CD4-positive, alpha-beta memory T cell (primary cell): ENCODE measurements at regions of chr1 and their contacts with region 1.

Region 1: DNA sequence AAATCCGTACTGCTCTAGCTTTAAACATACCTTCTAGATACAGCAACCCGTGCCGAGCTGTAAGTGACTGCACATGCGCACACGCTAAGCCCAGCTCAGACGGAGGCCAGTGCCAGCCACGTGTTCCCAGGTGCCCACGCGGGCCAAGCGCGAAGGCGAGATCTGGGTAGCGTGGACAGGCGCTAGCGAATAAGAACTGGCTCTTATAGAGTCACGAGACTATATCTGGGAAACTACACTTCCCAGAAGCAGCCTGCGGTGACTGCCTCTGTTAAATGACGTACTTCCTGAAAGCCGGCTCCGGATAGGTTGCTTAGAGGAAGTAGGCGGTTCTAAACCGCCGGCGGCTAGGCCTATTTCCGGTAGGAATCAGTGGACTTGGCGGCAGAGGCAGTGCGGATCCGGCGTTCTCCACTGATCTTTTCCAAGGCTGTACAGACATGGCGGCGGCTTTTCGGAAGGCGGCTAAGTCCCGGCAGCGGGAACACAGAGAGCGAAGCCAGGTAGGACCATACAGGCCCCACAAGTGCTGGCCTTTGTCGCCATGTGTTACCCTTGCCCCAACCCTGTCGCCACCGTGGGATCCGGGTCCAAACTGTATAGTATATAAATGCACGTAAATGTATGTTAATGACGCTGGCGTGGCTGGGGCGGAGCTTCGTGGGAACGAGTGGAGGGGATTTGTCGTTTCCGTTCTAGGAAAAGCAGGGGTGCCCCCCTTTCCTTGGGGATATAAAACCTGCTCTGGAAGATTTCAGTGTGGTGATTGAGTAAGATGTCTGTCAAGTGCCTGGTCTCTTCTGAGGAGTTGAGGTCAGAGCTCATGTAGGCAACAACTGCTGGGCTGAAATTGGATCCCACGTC is at the start of gene UTP11:
- DNase-seq: peak; percentile 91 to 96 (median 93)
- H3K4me3 ChIP-seq: peak within 1 kb of the TSS; percentile 72 to 94
- H3K4me3 Mint-ChIP-seq: peak within 1 kb of the TSS; percentile 91 to 100 (median 98)
- H3K27ac ChIP-seq: peak within 1 kb of the TSS; percentile 87
- H3K27ac Mint-ChIP-seq: peak within 1 kb of the TSS; percentile 92 to 100 (median 99)
- H3K4me1 ChIP-seq: peaks cover 29% of the 10 kb centered on the region
- H3K4me1 Mint-ChIP-seq: peaks cover 19 to 46% (median 34%) of the 10 kb centered on the region in 4 donors
- H3K27me3 ChIP-seq: no peaks in the 10 kb centered on the region
- H3K27me3 Mint-ChIP-seq: no peaks in the 10 kb centered on the region
- total RNA-seq, gene UTP11: 17.3 to 17.5 TPM

Region 2: DNA sequence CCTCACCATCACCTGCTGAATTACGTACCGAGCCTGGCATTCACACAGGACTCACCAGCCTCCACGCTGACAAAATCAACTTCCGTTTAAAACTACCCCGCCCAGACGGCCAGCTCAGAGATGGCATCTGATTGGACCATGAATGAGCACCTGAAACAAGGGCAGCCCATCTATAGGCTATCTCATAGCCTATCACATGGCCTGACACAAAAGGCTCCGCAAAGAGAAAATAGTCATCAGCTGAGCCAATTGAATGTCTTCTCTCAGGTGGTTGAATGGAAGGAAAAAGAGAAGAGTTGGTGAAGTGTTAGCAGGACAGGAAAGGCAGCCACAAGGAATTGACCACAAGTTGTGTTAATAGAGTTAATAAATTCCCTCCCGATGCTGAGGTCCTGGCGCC is 588.8 kb before region 1 on chr1:
- CTCF ChIA-PET with region 1: no interaction called
- POLR2A ChIA-PET with region 1: no interaction called
- intact Hi-C with region 1: no loop called
- DNase-seq: no peak
- H3K4me3 ChIP-seq: no peak overlapping the region
- H3K4me3 Mint-ChIP-seq: no peak overlapping the region
- H3K27ac ChIP-seq: no peak overlapping the region
- H3K27ac Mint-ChIP-seq: no peak overlapping the region
- H3K4me1 ChIP-seq: no peaks in the 10 kb centered on the region
- H3K4me1 Mint-ChIP-seq: no peaks in the 10 kb centered on the region
- H3K27me3 ChIP-seq: no peaks in the 10 kb centered on the region
- H3K27me3 Mint-ChIP-seq: peaks cover 10 to 37% of the 10 kb centered on the region in 2 donors

Region 3: DNA sequence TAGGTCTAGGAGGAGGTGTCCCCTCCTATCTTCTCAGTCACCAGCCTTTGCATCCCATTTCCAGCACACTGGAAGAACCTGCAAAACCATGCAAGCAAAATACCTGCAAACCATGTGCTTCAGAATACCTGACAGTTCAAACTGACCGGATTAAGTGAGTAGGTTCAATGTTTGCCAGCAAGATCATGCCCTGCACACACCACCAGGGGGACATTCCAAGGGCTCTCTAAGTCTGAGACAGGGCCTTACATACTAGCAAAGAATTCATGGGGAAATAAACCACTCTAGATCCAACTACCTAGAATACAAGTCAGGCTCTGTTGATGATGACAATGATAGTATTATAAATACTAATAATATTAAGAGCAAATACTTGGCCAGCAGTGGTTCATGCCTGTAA is 93.3 kb before region 1 on chr1:
- CTCF ChIA-PET with region 1: no interaction called
- POLR2A ChIA-PET with region 1: no interaction called
- intact Hi-C with region 1: no loop called
- DNase-seq: no peak
- H3K4me3 ChIP-seq: no peak overlapping the region
- H3K4me3 Mint-ChIP-seq: no peak overlapping the region
- H3K27ac ChIP-seq: no peak overlapping the region
- H3K27ac Mint-ChIP-seq: peak overlapping the region in 1 of 7 donors; percentile 15
- H3K4me1 ChIP-seq: peaks cover 8% of the 10 kb centered on the region
- H3K4me1 Mint-ChIP-seq: peaks cover 24 to 31% (median 26%) of the 10 kb centered on the region in 4 donors
- H3K27me3 ChIP-seq: no peaks in the 10 kb centered on the region
- H3K27me3 Mint-ChIP-seq: no peaks in the 10 kb centered on the region

Region 4: GRCh38 chr1:37995751-37996345 is 16.7 kb before region 1 on chr1:
- CTCF ChIA-PET with region 1: interaction called, 192 read pairs
- POLR2A ChIA-PET with region 1: interaction called, 18 read pairs
- intact Hi-C with region 1: no loop called
- DNase-seq: no peak
- H3K4me3 ChIP-seq: no peak overlapping the region
- H3K4me3 Mint-ChIP-seq: peak overlapping the region in 7 of 8 donors; percentile 64 to 86 (median 79)
- H3K27ac ChIP-seq: peak overlapping the region; percentile 44
- H3K27ac Mint-ChIP-seq: peak overlapping the region in 4 of 7 donors; percentile 22 to 95 (median 64)
- H3K4me1 ChIP-seq: peaks cover 9% of the 10 kb centered on the region
- H3K4me1 Mint-ChIP-seq: peaks cover 8 to 30% (median 14%) of the 10 kb centered on the region in 4 donors
- H3K27me3 ChIP-seq: no peaks in the 10 kb centered on the region
- H3K27me3 Mint-ChIP-seq: no peaks in the 10 kb centered on the region

Region 5: DNA sequence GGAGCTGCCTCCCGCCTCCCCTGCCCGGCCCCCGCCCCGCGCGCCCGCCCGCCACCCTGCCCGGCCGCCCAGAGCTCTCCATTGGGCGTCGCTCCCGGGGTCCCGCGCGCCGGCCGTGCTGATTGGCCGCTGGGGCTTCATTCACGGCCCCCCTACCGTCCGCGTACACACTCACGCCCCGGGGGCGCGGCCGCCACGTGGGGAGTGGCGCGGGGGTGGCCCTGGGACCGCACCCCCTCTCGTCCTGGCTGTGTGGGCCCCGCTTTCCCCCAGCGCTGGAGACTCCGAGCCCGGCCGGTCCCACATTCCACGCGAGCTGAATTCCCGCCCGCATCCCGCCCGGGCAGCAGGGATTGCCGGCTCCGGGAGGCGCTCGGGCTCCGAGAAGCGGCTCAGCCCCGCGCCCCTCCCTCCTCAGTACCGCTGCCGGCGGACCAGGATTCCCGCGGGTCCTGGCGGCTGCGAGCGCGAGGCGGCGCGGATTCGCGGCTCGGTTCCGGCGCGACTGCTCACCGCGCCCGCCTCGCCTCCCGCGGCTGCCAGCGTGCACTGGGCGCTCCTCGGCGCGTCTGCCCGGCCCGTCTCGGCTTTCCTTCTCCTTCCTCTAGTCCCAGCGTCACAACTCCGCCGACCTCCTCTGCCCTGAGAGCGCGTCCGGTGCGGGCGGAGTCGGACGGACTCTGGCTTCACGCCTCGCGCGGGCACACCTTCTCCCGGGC is 34.4 kb after region 1 on chr1:
- CTCF ChIA-PET with region 1: no interaction called
- POLR2A ChIA-PET with region 1: no interaction called
- intact Hi-C with region 1: loop called (anchors 1 kb)
- DNase-seq: peak in 4 of 5 donors; percentile 37 to 70 (median 60)
- H3K4me3 ChIP-seq: peak overlapping the region in 1 of 2 donors; percentile 38
- H3K4me3 Mint-ChIP-seq: peak overlapping the region; percentile 68 to 80 (median 78)
- H3K27ac ChIP-seq: no peak overlapping the region
- H3K27ac Mint-ChIP-seq: peak overlapping the region in 1 of 7 donors; percentile 46
- H3K4me1 ChIP-seq: peaks cover 18% of the 10 kb centered on the region
- H3K4me1 Mint-ChIP-seq: peaks cover 2 to 23% (median 8%) of the 10 kb centered on the region in 4 donors
- H3K27me3 ChIP-seq: peaks cover 26% of the 10 kb centered on the region
- H3K27me3 Mint-ChIP-seq: peaks cover 17% of the 10 kb centered on the region in 2 donors

Region 6: DNA sequence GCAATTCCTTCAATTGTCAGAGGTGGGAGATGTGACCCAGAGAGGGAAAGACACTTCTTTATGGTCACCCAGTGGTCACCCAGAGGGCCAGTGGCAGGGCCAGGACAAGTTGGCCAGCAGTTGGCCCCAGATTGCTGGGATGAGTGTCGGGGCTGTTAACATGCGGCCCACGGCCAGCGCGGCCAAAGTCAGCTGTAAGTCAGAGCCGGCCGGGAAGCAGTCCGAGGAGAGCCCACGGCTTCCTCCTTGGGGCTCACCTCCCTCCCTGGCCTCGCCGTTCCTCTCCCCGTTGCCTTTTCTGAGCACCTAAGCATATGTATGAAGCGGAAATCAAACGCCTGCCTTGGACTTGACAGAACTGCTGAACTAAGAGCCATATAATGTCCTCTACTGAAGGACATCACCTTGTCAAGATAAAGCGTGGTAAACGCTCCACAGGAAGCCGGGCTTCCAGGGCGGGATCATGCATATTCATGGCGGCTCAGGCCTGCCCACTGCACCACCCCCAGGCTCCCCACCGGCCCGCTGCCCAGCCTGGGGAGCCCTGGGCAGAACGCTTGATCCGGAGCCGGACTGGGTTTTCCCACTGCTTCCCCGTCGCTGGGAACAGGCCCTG is 279.4 kb after region 1 on chr1:
- CTCF ChIA-PET with region 1: no interaction called
- POLR2A ChIA-PET with region 1: no interaction called
- intact Hi-C with region 1: no loop called
- DNase-seq: no peak
- H3K4me3 ChIP-seq: no peak overlapping the region
- H3K4me3 Mint-ChIP-seq: no peak overlapping the region
- H3K27ac ChIP-seq: no peak overlapping the region
- H3K27ac Mint-ChIP-seq: no peak overlapping the region
- H3K4me1 ChIP-seq: no peaks in the 10 kb centered on the region
- H3K4me1 Mint-ChIP-seq: peaks cover 0 to 12% (median 1%) of the 10 kb centered on the region in 4 donors
- H3K27me3 ChIP-seq: peaks cover 3% of the 10 kb centered on the region
- H3K27me3 Mint-ChIP-seq: peaks cover 31 to 45% of the 10 kb centered on the region in 2 donors